ENCODE measurements at regions of chr7 and their contacts with region 1.

Region 1: DNA sequence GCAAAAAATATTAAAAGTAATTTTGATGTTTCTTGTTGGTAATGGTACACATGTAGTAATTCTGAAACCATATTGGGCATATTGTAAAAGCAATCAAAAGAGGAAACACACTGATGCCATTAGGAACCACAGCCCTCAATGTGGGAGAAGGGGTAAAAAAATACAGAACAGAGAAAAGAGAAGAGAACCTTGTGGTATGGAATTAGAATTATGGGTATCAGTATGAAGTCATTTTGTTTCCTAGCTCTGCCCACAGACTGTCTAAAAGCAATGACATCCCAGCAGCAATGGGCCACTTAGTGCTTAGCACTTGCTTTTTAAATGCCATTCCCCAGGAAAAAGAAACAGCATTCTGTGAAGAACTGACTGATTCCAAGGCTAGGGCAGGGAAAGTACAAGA is 61.5 kb downstream of the CPVL start:
- DNase-seq: no peak
- H3K4me3 ChIP-seq: no peak overlapping the region
- H3K27ac ChIP-seq: no peak overlapping the region
- H3K4me1 ChIP-seq: peaks cover 25% of the 10 kb centered on the region
- H3K27me3 ChIP-seq: no peaks in the 10 kb centered on the region
- CTCF ChIP-seq: no peak

Region 2: GRCh38 chr7:29005829-29006228 is 79.0 kb before region 1 on chr7:
- intact Hi-C with region 1: loop called (anchors 10 kb)
- DNase-seq: no peak
- H3K4me3 ChIP-seq: no peak overlapping the region
- H3K27ac ChIP-seq: no peak overlapping the region
- H3K4me1 ChIP-seq: peaks cover 25% of the 10 kb centered on the region
- H3K27me3 ChIP-seq: no peaks in the 10 kb centered on the region
- CTCF ChIP-seq: no peak

Region 3: GRCh38 chr7:29156907-29157452 is 72.1 kb after region 1 on chr7:
- intact Hi-C with region 1: no loop called
- DNase-seq: no peak
- H3K4me3 ChIP-seq: peak overlapping the region; percentile 1
- H3K27ac ChIP-seq: peak overlapping the region; percentile 11
- H3K4me1 ChIP-seq: peaks cover 17% of the 10 kb centered on the region
- H3K27me3 ChIP-seq: peaks cover 6% of the 10 kb centered on the region
- CTCF ChIP-seq: no peak